ENCODE measurements at regions of chr20 and their contacts with region 1.

Region 1: DNA sequence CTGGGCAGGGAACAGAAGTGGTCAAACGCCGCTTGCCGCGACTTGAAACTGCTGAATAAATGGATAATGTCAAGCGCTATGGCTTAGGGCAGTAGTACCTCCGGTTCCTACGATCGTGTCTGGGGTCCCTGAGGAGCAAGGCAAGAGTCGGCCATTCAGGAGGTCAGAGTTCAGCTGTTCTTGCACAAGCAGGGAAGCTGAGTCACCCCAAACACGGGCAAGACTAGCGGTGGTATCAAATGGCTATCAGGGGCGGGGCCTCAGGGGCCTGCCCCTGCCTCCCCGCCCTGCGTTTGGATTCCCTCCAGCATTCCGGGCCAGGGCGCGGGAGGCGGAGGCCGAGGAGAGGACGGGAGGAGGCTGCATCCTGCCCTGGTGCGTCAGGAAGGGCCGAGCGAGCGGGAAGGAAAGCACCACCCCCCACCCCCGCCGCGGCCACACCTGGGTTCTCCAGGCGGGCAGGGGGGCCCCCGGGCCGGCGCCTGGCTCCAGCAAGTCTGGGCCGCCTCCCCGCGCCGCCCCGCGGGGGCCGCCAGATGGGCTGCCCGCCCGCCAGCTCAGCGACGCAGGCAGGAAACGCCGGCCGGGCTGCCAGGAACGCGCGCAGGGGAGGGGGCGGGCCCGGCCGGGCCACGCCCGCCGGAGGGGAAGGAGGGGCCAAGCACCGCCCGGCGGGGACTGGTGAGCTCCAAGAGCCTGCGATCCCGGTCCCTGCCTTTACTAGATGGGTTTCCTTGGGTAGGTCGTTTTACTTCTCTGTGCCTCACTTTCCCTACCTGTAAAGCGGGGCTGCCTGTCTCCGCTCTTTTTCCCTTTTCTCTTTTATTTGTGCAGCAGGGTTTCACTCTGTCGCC is 32.2 kb upstream of the ID1 start:
- DNase-seq: peak; percentile 97

Region 2: GRCh38 chr20:31587545-31588389 is 14.8 kb after region 1 on chr20:
- intact Hi-C with region 1: loop called (anchors 1 kb)
- DNase-seq: peak; percentile 88

Region 3: DNA sequence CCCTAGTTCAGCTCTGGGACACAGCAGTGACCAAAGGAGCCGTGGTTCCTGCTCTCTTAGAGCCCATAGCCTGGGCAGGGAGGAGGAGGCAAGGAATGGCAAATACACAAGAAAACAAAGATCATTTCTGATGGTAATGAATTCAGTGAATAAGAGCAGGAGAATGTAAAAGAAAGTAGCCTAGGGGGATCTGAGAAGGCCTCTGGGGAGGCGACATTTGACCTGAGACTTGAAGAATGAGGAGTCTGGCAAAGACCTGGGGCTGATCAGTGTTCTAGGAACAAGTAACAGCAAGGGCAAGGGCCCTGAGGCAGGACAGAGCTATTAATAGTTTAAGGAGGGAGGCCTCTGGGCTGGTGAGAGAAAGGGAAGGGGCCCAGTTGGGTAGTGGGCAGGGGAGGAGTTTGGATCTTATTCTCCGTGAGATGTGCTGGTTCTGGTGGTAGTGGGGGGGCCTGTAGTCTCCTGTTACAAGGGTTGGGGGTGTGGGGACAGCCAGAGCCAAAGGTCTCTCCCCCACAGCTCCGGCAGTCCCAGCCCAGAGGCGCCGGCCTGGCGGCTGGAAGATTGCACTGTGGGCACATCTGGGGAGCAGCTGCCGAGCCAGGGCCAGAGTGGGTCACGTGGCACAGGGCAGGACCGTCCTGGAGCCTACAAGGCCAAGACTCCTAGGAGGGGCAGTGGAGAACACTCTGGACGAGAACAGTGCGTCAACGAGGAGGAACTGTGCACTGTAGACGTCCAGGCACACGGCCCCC is 22.9 kb after region 1 on chr20:
- intact Hi-C with region 1: loop called (anchors 2 kb)
- DNase-seq: peak; percentile 92

Measured in cardiac septum (tissue), 1 donor.